Posterior cingulate gyrus (tissue), 11 donors: ENCODE measurements at regions of chr1 and their contacts with region 1.

Region 1: DNA sequence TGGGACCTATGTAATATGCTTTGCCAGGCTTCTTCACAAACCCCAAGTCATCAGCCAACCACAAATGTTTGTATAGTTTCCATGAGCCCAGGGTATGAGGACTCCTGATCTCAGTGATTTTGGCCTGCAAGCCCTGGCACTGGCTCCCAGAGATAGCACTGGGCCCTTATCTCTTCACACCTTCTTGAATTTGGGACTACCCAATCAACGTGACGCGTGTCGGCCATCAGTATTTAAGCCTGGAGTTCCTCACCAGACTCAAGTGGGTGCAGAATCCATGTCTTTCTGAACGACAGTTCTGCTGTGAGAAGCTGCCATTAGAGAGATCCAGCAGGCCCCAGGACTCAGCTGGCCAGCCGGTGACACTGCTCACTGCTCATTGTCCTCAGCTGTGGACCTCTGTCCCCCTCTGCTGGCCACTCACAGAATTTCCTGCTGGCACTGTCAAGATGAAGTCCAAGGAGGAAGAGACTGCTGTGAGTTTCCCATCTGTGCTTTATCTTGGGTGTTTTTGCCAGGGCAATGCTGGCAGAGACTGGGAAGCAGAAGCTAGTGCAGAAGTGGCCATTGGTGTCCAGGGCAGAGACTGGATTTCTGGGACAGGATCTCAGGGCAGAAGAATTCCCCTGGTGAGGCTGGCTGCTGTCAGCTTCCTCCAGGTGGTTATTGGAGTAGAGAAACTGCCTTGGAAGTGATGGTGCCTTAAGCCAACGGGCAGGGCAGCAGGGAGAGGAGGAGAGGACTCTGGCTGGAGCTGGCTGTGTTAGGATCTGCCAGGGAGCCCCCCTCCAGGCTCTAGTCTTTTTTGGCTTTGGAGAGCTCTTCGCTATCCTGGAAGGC is 28.4 kb downstream of the TMCC2 start:
- DNase-seq: peak; percentile 92 to 99 (median 96)

Region 2: DNA sequence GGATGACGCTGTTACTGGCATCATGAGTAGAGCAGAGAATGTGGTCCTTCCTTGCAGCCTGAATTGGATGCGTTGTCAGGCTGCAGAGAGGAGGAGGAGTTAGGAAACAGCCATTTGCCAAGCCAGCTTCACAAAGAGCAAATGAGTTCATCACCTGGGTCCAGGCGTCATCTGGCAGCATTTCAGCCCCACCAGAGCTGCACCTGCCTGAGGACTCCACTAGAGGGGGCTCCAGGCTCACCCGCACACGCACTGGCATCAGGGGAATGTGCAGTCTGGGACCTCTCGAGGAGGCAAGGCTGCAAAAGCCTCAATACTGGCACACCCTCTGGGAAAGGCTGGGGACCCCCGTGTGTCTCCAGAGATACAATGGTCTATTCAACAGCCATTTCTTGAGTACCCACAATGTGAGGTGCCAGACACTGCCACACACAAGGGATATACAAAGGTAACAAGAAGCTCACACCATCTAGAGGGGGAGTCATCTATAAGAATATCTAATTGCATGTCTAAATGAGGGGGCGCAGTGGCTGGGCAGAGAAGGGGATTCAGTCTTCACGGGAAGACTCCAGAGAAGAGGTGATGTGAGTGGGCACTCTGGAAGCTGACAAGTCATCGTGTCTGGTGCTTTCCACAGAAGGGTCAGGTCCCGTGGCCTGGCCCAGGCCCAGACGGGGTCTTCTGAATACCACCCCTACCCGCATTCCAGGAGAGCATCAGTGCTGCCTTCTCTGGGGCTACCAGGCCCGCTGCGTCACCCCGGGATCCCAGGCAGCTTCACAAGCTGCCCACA is 266.7 kb before region 1 on chr1:
- intact Hi-C with region 1: loop called (anchors 10 kb)
- DNase-seq: peak; percentile 73 to 98 (median 85)

Region 3: GRCh38 chr1:205042911-205043806 is 213.0 kb before region 1 on chr1 and contains the start of gene CNTN2:
- intact Hi-C with region 1: loop called (anchors 10 kb)
- DNase-seq: peak; percentile 82 to 98 (median 88)

Region 4: GRCh38 chr1:205091043-205091740 is 165.0 kb before region 1 on chr1:
- intact Hi-C with region 1: no loop called
- DNase-seq: no peak

Region 5: DNA sequence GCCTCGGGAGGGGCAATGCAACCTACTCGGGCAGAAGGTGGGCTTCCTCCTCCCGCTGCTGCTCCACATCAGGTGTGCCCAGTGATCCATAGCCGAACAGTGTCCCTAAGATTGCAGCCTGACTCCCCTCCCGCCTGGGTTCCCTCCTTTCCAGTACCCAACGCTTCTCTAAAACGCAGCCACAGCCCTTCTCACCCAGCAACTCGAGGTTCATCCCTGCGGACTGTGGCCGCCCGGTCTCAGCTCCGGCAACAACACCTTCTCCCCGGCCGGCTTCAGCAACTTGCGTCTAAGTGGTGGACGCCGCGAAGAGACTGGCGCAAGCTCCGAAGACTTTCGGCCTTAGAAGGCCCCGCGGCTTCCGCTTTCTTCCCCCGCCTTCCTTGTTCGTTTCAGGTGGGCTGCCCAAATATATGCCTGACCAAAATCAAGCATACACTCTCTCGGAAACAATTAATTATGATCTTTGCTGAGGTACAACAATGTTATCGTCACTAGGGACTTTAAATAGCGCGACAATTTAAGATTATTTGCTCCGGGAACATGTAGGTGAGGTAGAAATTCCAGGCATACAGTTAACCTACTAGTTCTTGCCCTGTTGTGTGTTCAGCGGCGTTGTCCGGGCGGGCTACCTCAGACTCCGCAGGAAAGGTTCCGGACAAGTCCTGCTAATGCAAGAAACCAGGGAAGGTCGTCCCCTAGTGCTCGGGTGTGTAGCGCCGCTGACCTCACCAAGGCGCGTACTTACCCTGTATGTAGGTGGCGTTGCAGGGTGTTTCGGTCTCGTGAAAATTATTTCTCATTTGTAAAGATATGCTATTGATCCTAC is 134.3 kb before region 1 on chr1 and contains the start of gene RBBP5:
- intact Hi-C with region 1: loop called (anchors 10 kb)
- DNase-seq: peak; percentile 91 to 99 (median 94)

Region 6: GRCh38 chr1:205199090-205199930 is 56.9 kb before region 1 on chr1:
- intact Hi-C with region 1: no loop called
- DNase-seq: peak in 2 of 10 donors; percentile 10 to 31

Region 7: DNA sequence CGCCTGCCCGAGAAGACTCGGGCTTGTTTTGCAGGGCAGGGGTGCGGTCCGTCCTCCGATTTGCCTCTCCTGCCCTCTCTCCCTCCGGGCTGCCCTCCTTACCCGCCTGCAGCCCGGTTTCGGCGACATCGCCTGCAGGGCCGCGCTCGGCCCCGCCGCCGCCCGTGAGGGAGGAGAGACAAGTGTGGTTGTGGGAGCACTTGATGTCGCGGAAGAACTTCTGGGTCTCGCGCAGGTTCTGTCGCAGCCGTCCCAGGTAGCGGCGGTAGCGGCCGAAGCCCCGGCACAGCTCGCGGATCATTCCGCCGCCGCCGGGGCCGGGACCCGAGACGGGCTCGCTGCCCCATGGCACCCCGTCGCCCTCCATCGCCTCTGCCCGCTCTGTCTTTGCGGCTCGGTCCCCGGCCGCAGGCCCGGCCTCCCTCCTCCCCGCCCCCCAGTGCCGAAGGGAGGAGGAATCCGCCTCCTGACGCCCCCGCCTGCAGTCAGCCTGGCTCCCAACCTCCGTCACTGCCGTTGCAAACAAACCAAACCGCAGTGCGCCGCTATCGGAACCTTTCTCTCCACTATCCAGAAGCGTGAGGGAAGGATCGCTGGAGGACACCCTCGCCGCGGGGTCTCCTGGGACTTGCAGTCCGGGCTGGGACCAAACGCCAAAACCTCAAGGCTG is 44.9 kb before region 1 on chr1 and contains the start of gene DSTYK:
- intact Hi-C with region 1: loop called (anchors 5 kb)
- DNase-seq: peak; percentile 92 to 99 (median 96)

Region 8: DNA sequence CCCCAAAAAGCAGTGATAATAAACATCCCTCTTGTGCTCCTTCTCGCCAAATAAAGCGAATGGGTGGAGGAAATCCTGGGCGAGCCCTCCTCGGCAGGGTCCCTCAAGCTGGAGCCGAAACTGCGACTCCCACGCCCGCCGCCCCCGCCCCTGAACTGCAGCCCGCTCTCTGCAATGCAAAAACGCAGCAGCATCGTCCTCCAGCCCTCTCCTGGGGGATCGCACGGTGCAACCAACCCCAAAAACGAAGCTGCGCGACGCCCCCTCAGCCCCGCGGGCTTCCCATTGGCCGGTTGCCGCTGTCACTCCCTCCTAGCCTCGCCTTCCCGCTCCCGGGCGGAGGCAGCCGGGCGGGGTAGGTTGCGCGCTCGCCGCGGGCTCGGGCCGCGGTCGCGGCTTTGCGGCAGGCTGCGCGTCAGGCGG is 28.6 kb before region 1 on chr1 and contains the start of gene TMCC2:
- intact Hi-C with region 1: loop called (anchors 2 kb)
- DNase-seq: peak; percentile 95 to 99 (median 97)

Region 9: DNA sequence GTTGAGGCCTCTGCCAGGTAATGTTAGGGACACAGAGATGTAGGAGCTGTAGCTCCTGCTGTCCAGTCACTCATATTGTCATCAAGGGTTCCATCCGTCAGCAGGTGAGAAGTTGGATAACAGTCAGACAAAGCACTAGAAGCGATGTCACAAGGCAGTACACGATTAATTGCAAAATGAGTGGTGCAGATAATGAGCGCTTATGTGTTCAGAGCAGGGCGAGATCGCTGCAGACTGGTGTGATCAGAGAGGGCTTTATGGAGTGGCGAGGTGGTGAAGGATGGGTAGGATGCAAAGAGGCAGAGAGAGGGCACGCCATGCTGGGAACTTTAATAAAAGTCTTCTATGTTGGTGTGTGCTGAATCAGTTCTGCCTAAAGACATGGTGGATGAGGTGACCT is 19.6 kb before region 1 on chr1:
- intact Hi-C with region 1: loop called (anchors 1 kb)
- DNase-seq: peak in 1 of 10 donors; percentile 14